Activated CD4-positive, alpha-beta T cell treated with anti-CD3 and anti-CD28 coated beads, Interleukin-2, amount 10 ng/mL, durations not matched to agents 7 days and 5 days (primary cell): ENCODE measurements at regions of chr10 and their contacts with region 1.

Region 1: DNA sequence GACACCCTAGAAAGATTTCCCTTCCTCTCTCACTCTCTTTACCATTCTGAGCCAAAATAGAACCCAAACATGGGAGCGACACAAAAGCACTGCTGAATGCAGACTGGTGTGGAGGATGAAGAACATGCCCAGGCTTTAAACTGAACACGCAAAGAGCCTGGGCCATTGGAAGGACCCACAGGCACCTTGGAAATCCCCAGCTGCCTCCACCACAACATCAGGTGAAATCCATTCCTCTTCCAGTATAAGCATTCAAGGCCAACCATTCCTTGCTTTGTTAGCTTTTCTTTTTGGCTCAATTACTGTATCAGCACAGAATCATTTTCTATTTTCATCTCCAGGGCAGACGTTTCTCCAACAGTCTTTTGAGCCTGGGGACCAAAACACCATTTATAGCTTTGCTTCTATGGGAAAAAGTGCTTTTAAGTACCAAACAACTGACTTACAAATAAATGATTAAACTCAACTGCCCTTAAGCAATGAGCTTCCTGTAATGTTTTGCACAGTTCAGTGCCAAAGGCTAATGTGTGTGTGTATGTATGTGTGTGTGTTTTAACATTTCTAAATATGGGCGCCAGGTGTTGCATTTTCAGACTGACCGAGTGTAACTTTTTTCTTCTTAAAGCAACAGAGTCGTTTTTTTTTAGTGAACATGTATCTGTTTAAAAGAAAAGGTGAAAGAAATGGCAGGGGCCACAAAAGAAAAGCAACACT is 16.2 kb upstream of the BLNK start:
- DNase-seq: no peak
- H3K4me3 Mint-ChIP-seq: no peak overlapping the region
- H3K27ac Mint-ChIP-seq: no peak overlapping the region
- H3K4me1 Mint-ChIP-seq: peaks cover 13% of the 10 kb centered on the region
- H3K27me3 Mint-ChIP-seq: peaks cover 4% of the 10 kb centered on the region

Region 2: DNA sequence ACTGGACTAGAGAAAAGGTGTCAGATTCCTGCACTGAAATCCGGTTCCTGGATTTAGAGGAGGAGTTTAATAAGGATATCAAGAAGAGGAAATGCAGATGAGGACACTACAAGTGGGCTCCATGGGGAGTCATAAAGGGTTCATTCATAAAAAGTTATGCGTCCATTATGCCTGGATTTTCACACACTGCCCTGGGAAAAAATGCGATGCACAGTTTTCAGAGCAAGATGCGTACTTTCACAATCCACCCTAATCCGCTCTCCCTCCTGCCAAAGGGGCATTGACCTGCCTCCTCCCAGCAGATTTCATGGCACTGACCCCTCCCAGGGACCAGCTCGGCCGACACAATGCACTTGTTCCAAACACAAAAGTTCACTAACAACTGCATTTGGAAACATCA is 113.5 kb after region 1 on chr10:
- CTCF ChIA-PET with region 1: no interaction called
- POLR2A ChIA-PET with region 1: no interaction called
- DNase-seq: no peak
- H3K4me3 Mint-ChIP-seq: no peak overlapping the region
- H3K27ac Mint-ChIP-seq: no peak overlapping the region
- H3K4me1 Mint-ChIP-seq: peaks cover 1% of the 10 kb centered on the region
- H3K27me3 Mint-ChIP-seq: peaks cover 18% of the 10 kb centered on the region

Region 3: GRCh38 chr10:96463562-96463961 is 176.0 kb after region 1 on chr10:
- CTCF ChIA-PET with region 1: no interaction called
- POLR2A ChIA-PET with region 1: no interaction called
- DNase-seq: no peak
- H3K4me3 Mint-ChIP-seq: no peak overlapping the region
- H3K27ac Mint-ChIP-seq: peak overlapping the region; percentile 11
- H3K4me1 Mint-ChIP-seq: no peaks in the 10 kb centered on the region
- H3K27me3 Mint-ChIP-seq: peaks cover 12% of the 10 kb centered on the region

Region 4: DNA sequence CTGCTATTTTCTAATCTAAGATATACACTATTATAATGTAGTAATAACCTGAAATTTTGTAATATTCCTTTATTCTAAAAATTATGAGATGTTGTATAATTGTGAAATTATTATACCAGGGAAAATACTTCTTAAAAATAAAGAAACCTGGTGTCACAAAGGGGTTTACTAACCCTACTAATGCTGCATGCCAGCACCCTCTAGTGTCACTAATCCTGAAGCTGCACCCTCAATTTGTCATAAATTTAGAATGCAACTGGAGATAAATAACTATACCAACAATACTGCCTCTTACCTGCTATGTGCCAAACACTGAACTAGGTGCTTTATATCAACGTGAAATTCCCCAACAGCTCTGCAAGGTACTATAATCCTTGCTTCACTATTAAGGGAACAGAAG is 268.5 kb after region 1 on chr10:
- CTCF ChIA-PET with region 1: no interaction called
- POLR2A ChIA-PET with region 1: interaction called, 10 read pairs
- DNase-seq: peak; percentile 17
- H3K4me3 Mint-ChIP-seq: no peak overlapping the region
- H3K27ac Mint-ChIP-seq: no peak overlapping the region
- H3K4me1 Mint-ChIP-seq: no peaks in the 10 kb centered on the region
- H3K27me3 Mint-ChIP-seq: no peaks in the 10 kb centered on the region